H1 (cell line): ENCODE measurements at regions of chr17 and their contacts with region 1.

Region 1: DNA sequence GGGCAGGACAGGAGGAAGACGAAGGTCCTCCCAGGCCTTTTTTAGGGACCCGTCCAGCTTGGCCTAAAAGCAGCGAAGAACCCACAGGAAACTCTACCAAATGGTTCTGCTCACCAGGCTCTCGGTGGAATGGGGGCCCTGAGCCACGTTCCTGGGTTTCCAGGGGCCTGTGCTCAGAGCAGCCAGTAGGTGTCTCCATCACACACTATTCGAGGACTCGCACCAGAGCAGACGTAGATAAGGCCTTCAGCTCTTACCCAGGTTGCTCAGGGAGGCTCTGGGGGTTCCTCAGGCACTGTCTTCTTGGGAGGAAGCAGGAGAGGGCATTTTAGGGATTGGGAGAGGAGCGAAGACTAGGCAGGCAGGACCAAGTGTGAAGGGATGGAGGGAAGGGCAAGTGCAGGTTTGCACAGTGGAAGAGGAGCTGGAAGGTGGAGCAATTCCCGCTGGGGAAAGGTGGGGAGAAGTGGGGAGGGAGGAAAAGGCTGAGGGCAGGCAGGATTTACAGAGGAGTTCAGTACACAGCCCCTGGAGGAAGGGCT is 157.1 kb downstream of the RGS9 start:
- DNase-seq: peak; percentile 34 to 77
- H3K4me3 ChIP-seq: no peak overlapping the region
- H3K27ac ChIP-seq: no peak overlapping the region
- H3K4me1 ChIP-seq: peaks cover 0 to 10% (median 7%) of the 10 kb centered on the region in 4 experiments; a peak in 5 of 7 replicates
- H3K27me3 ChIP-seq: no peaks in the 10 kb centered on the region
- CTCF ChIP-seq: peak; percentile 80 to 96 (median 83)
- EP300 ChIP-seq: no peak
- POLR2A ChIP-seq: no peak
- RAD21 ChIP-seq: peak; percentile 86 to 93

Region 2: GRCh38 chr17:65101371-65101770 is 192.9 kb before region 1 on chr17:
- CTCF ChIA-PET with region 1: no interaction called
- POLR2A ChIA-PET with region 1: no interaction called
- DNase-seq: no peak
- H3K4me3 ChIP-seq: peak overlapping the region in 2 of 4 experiments; percentile 38 to 66; a peak in 3 of 8 replicates
- H3K27ac ChIP-seq: no peak overlapping the region
- H3K4me1 ChIP-seq: peaks cover 0 to 6% (median 3%) of the 10 kb centered on the region in 4 experiments; a peak in 2 of 7 replicates
- H3K27me3 ChIP-seq: no peaks in the 10 kb centered on the region
- CTCF ChIP-seq: no peak
- EP300 ChIP-seq: no peak
- POLR2A ChIP-seq: no peak
- RAD21 ChIP-seq: no peak

Region 3: DNA sequence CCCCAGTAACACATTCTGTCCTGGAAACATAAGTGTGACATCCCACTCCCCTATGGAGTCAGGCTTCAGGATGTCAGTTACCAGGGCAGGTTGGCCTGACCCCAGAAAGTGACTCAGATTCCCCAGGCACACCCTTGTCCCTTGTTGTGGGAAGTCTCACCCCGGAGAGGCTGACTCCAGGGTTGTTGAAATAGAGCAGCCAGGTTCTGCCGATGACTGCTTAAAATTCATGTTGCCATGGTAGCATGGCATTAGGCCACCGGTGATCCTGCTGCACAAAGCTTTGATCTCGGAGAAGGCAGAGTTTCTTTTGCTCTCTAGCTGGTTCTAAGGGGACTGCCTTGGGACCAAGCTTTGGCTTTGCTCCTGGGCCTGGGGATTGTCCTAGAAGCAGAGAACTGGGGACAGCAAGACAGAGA is 50.4 kb before region 1 on chr17:
- CTCF ChIA-PET with region 1: no interaction called
- POLR2A ChIA-PET with region 1: no interaction called
- DNase-seq: no peak
- H3K4me3 ChIP-seq: no peak overlapping the region
- H3K27ac ChIP-seq: no peak overlapping the region
- H3K4me1 ChIP-seq: peaks cover 0 to 8% (median 5%) of the 10 kb centered on the region in 4 experiments; a peak in 4 of 7 replicates
- H3K27me3 ChIP-seq: no peaks in the 10 kb centered on the region
- CTCF ChIP-seq: no peak
- EP300 ChIP-seq: no peak
- POLR2A ChIP-seq: no peak
- RAD21 ChIP-seq: no peak

Region 4: DNA sequence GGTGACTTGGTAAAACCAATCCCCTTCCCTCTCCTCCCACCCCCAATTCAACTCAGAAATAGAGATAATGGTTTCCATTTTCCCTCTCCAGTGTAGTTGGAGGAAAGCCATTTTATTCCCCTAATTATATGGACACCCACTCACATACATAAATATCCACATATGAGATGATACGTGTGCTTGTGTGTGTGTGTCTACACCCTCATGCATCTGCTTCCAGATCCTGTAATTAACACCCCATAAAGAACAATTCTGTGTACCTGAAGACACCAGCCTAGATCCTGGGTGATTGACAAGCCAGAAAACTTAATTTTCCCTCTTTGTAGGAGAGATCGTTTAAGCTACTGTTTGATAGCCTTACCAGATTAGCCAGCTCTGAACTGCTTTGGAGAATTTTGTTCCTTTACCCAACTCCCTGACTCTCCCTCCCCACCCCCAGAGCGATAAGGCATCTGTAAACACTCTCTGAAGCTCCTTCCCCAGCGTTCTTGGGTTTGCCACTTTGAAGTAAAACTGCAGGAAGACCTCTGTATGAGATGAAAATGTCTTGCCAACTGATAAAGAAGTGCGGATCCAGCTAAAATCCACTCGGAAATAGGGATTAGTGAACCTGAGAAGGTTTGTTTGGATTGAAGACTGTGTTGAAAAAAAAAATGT is 18.6 kb after region 1 on chr17:
- CTCF ChIA-PET with region 1: interaction called, 15 read pairs
- POLR2A ChIA-PET with region 1: interaction called, 3 read pairs
- DNase-seq: no peak
- H3K4me3 ChIP-seq: no peak overlapping the region
- H3K27ac ChIP-seq: no peak overlapping the region
- H3K4me1 ChIP-seq: 0 out of 7 replicates have a peak, but pooled peaks cover 0 to 2% (median 0%) of the 10 kb centered on the region in 4 experiments
- H3K27me3 ChIP-seq: no peaks in the 10 kb centered on the region
- CTCF ChIP-seq: no peak
- EP300 ChIP-seq: no peak
- POLR2A ChIP-seq: no peak
- RAD21 ChIP-seq: no peak

Region 5: GRCh38 chr17:65323049-65323448 is 28.8 kb after region 1 on chr17:
- CTCF ChIA-PET with region 1: no interaction called
- POLR2A ChIA-PET with region 1: no interaction called
- DNase-seq: no peak
- H3K4me3 ChIP-seq: no peak overlapping the region
- H3K27ac ChIP-seq: no peak overlapping the region
- H3K4me1 ChIP-seq: no peaks in the 10 kb centered on the region
- H3K27me3 ChIP-seq: no peaks in the 10 kb centered on the region
- CTCF ChIP-seq: no peak
- EP300 ChIP-seq: no peak
- POLR2A ChIP-seq: no peak
- RAD21 ChIP-seq: no peak

Region 6: DNA sequence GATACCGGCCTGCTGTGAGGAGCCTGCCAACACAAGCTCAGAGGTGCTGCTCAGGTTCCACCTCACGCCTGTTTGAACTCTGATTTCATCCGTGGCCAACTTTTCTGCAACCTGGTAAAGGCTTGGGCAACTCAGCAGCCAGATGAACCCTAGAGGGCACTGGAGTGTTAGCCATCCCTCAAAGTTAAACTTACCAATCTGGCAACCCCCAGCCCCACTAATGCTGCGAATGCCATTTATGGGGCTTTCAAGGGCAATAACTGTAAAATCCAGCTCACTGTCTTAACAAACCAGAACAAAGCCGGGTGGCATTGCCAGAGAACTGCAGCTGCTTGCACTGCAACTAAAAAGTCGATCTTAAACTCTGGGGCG is 161.7 kb after region 1 on chr17:
- CTCF ChIA-PET with region 1: interaction called, 10 read pairs
- POLR2A ChIA-PET with region 1: interaction called, 13 read pairs
- DNase-seq: peak; percentile 47 to 48
- H3K4me3 ChIP-seq: no peak overlapping the region
- H3K27ac ChIP-seq: no peak overlapping the region
- H3K4me1 ChIP-seq: peaks cover 8 to 21% (median 11%) of the 10 kb centered on the region in 4 experiments
- H3K27me3 ChIP-seq: no peaks in the 10 kb centered on the region; a peak in 2 of 7 replicates
- CTCF ChIP-seq: peak; percentile 56 to 74 (median 72)
- EP300 ChIP-seq: no peak
- POLR2A ChIP-seq: no peak
- RAD21 ChIP-seq: peak; percentile 87 to 94